ENCODE measurements at regions of chr2 and their contacts with region 1.

Region 1: DNA sequence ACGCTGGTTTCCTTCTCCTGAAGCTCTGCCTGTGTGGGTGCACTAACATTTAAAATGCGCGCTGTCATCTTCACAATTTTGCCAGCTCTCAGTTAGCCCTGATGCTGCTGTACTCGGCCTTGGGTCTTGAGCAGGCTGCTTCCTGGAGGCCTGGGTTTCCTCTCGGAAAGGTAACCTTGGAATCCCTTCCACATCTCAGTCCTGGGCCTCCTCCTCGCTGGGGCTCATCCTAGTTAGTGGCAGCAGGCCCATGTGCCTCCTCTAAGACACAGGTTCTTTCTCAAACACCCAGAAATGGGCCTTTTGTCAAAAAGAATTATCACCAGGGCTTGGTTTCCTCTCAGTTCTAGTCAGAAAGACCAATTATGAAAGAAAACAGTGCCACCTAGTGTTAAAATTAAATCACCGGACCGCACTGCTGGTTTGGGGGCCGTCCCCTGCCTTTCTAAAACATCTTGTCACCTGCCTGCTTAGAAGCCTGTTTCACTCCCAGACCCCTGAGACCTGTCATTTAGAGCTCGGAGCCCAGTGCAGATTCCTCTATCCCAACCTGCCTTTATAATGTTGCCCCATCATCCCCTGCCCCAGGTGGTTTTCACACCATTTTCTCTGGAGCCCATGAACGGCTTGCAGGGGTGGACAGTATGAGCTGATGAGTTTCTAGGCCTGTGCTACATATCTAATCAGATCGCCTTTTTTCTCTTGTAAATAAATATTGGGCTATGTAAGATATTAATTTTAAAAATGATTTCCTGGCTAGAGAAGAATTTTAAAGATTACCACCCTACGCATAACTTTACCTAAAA is 42.4 kb downstream of the HK2 start:
- DNase-seq: peak; percentile 48 to 73 (median 66)
- H3K4me3 ChIP-seq: no peak overlapping the region
- H3K4me3 Mint-ChIP-seq: no peak overlapping the region
- H3K27ac ChIP-seq: no peak overlapping the region
- H3K27ac Mint-ChIP-seq: peak overlapping the region in 3 of 7 donors; percentile 22 to 76 (median 53)
- H3K4me1 ChIP-seq: peaks cover 3% of the 10 kb centered on the region
- H3K4me1 Mint-ChIP-seq: peaks cover 0 to 7% (median 4%) of the 10 kb centered on the region in 4 donors
- H3K27me3 ChIP-seq: no peaks in the 10 kb centered on the region
- H3K27me3 Mint-ChIP-seq: no peaks in the 10 kb centered on the region

Region 2: GRCh38 chr2:74690571-74690970 is 185.7 kb before region 1 on chr2:
- CTCF ChIA-PET with region 1: interaction called, 33 read pairs
- POLR2A ChIA-PET with region 1: no interaction called
- intact Hi-C with region 1: loop called (anchors 1 kb)
- DNase-seq: peak in 4 of 5 donors; percentile 23 to 42 (median 25)
- H3K4me3 ChIP-seq: no peak overlapping the region
- H3K4me3 Mint-ChIP-seq: no peak overlapping the region
- H3K27ac ChIP-seq: no peak overlapping the region
- H3K27ac Mint-ChIP-seq: no peak overlapping the region
- H3K4me1 ChIP-seq: no peaks in the 10 kb centered on the region
- H3K4me1 Mint-ChIP-seq: no peaks in the 10 kb centered on the region
- H3K27me3 ChIP-seq: no peaks in the 10 kb centered on the region
- H3K27me3 Mint-ChIP-seq: peaks cover 0 to 2% of the 10 kb centered on the region in 2 donors

Region 3: DNA sequence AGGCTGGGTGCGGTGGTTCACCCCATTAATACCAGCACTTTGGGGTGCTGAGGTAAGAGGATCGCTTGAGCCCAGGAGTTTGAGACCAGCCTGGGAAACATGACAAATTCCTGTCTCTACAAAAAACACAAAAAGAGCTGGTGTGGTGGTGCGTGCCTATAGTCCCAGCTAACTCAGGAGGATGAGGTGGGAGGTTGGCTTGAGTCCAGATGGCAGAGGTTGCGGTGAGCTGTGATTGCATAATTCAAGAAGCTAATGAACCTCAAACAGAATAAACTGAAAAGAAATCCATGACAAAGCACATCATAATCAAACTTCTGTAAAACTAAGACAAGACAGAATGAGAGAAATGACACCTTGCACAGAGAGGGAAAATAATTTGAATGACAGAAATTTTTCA is 167.4 kb before region 1 on chr2:
- CTCF ChIA-PET with region 1: interaction called, 287 read pairs
- POLR2A ChIA-PET with region 1: no interaction called
- intact Hi-C with region 1: no loop called
- DNase-seq: no peak
- H3K4me3 ChIP-seq: no peak overlapping the region
- H3K4me3 Mint-ChIP-seq: no peak overlapping the region
- H3K27ac ChIP-seq: no peak overlapping the region
- H3K27ac Mint-ChIP-seq: no peak overlapping the region
- H3K4me1 ChIP-seq: no peaks in the 10 kb centered on the region
- H3K4me1 Mint-ChIP-seq: no peaks in the 10 kb centered on the region
- H3K27me3 ChIP-seq: no peaks in the 10 kb centered on the region
- H3K27me3 Mint-ChIP-seq: no peaks in the 10 kb centered on the region

Region 4: DNA sequence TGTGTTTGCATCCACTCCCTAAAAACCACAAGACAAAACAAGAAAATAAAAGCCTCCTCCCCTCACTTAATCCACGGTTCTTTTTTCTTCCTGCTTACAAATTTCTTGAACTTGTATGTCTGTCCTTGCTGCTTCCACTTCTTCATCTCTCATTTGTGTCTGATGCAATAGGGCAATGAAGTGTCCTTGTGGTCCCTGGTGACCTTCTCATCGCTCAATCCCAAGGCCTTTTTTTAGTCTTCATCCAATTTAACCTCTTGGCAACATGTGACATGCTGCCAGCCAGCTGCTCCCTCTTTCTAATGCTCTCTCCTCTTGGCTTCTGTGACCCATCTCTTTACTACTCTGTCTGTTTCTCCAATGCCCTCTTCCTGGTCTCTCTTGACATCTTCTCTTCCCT is 134.6 kb before region 1 on chr2:
- CTCF ChIA-PET with region 1: interaction called, 14 read pairs
- POLR2A ChIA-PET with region 1: no interaction called
- intact Hi-C with region 1: no loop called
- DNase-seq: no peak
- H3K4me3 ChIP-seq: no peak overlapping the region
- H3K4me3 Mint-ChIP-seq: no peak overlapping the region
- H3K27ac ChIP-seq: no peak overlapping the region
- H3K27ac Mint-ChIP-seq: no peak overlapping the region
- H3K4me1 ChIP-seq: no peaks in the 10 kb centered on the region
- H3K4me1 Mint-ChIP-seq: no peaks in the 10 kb centered on the region
- H3K27me3 ChIP-seq: no peaks in the 10 kb centered on the region
- H3K27me3 Mint-ChIP-seq: peaks cover 3 to 11% of the 10 kb centered on the region in 2 donors

Region 5: GRCh38 chr2:74833418-74834233 is 42.7 kb before region 1 on chr2 and contains the start of gene HK2:
- CTCF ChIA-PET with region 1: interaction called, 147 read pairs
- POLR2A ChIA-PET with region 1: interaction called, 3 read pairs
- intact Hi-C with region 1: loop called (anchors 1 kb)
- DNase-seq: peak; percentile 74 to 80 (median 77)
- H3K4me3 ChIP-seq: peak within 1 kb of the TSS; percentile 61 to 68
- H3K4me3 Mint-ChIP-seq: peak within 1 kb of the TSS; percentile 84 to 96 (median 92)
- H3K27ac ChIP-seq: peak within 1 kb of the TSS; percentile 47
- H3K27ac Mint-ChIP-seq: peak within 1 kb of the TSS; percentile 68 to 91 (median 86)
- H3K4me1 ChIP-seq: peaks cover 33% of the 10 kb centered on the region
- H3K4me1 Mint-ChIP-seq: peaks cover 25 to 43% (median 32%) of the 10 kb centered on the region in 4 donors
- H3K27me3 ChIP-seq: no peaks in the 10 kb centered on the region
- H3K27me3 Mint-ChIP-seq: no peaks in the 10 kb centered on the region
- total RNA-seq, gene HK2: 7.3 to 9.4 TPM

Region 6: DNA sequence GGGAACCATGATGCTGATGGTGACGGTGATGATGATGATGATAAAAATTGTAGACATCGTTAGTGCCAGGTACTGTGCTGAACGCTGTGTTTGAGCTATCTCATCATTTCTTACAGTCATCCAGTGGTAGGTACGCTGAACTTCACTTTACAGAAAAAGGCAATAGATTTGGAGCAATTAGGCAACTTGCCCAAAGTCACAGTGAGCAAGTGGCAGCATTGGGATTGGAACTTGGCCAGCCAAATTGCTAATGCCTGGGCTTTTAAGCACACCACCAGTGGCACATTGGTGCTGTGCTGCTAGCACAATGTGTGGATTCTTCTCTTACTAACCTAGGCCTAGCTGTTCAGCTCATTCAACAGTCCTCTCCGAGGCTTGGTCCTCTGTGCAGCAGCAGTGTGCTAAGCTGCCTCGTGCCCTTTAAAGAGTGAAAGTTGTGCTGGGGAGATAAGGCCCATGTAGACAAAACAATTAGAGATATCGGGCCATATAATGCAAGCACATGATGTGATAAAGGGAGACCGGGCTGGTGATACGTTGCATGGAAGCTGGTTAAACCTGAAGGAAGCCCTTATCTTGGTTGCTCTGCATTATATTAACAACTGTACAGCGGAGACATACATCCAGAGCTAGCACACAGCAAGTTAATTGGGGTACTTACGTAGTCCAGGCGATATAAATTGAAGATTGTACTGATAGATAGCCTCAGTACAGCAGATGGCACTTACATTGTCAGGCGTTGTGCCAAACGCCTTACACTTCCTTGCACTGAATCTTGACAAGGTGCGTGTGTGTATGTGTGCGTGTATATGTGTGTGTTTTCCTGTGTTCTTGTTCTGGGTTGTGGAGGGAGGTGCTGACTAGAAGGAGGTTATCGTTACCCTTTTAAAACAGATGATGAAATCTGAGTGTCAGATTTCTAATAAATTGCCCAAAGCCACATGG is 14.0 kb before region 1 on chr2:
- CTCF ChIA-PET with region 1: interaction called, 15 read pairs
- POLR2A ChIA-PET with region 1: interaction called, 3 read pairs
- intact Hi-C with region 1: no loop called
- DNase-seq: no peak
- H3K4me3 ChIP-seq: no peak overlapping the region
- H3K4me3 Mint-ChIP-seq: no peak overlapping the region
- H3K27ac ChIP-seq: no peak overlapping the region
- H3K27ac Mint-ChIP-seq: peak overlapping the region in 1 of 7 donors; percentile 22
- H3K4me1 ChIP-seq: no peaks in the 10 kb centered on the region
- H3K4me1 Mint-ChIP-seq: peaks cover 0 to 7% (median 5%) of the 10 kb centered on the region in 4 donors
- H3K27me3 ChIP-seq: no peaks in the 10 kb centered on the region
- H3K27me3 Mint-ChIP-seq: no peaks in the 10 kb centered on the region

Measured in CD4-positive, alpha-beta memory T cell (primary cell).